ENCODE measurements at regions of chr20 and their contacts with region 1.

Region 1: DNA sequence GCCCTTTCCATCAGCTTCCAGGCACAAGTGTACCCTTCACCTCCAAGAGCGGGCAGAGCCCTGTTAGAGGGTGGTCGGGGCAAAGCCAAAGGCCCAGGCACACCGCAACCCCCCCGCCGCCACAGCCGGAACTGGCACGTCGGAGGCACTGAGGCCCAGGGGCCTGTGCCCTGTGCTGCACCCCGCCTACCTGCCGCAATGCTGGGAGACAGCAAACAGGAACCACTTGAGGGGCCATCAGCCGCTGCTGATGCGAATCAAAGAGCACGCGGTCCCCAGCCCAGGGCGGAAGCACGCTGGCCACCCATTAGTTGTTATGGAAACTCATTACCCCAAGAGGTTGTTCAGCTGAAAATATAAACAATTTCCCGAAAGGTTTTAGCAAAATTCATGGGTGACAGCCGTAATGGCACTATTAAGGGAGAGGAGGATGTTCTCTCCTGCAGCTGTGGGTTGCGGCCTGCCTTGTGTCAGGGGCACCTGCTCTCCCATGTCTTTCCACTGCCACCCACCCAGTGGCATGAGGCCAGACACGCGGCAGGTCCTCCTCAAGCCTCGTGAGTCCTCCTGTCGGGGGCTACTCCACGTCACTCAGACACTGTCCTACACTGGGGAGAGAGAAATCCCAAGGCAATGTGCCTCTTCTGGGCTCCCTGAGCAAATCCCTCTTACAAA is 65.3 kb downstream of the EDN3 start:
- DNase-seq: no peak
- H3K4me3 Mint-ChIP-seq: no peak overlapping the region
- H3K27ac Mint-ChIP-seq: no peak overlapping the region
- H3K4me1 Mint-ChIP-seq: no peaks in the 10 kb centered on the region
- H3K27me3 Mint-ChIP-seq: peaks cover 93% of the 10 kb centered on the region
- CTCF ChIP-seq: no peak

Region 2: DNA sequence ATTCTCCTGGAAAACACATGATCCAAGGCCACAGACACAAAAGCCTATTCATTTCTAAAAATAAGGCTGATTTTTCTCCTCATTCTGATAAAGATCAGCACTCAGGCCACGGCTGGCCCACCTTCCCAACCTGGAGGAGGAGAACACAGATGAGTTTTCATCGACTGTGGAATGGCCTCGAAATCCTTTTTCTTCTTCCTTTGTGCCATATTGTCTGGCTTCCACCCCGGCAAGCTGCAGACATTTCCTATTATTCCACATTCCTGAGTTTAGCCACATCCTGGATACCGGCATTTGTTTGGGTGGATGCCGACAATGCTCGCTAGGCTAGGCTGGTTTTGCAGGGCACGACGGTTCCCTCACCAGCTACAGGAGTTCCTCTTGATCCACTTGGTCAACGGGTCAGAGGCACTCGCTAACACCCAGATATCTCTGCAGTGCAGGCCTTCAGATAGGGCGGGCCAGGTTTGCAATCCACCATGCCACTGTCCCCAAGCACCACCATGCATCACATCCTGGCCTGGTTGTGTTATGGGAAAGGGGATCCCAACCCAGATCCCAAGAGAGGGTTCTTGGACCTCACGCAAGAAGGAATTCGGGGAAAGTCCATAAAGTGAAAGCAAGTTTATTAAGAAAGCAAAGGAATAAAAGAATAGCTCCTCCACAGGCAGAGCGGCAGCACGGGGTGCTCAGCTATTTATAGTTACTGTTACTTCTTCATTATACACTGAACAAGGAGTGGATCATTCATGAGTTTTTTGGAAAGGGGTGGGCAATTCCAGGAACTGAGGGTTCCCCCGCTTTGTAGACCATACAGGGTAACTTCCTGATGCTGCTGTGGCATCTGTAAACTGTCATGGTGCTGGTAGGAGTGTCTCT is 354.5 kb before region 1 on chr20:
- CTCF ChIA-PET with region 1: interaction called, 13 read pairs
- intact Hi-C with region 1: no loop called
- DNase-seq: peak; percentile 73
- H3K4me3 Mint-ChIP-seq: peak overlapping the region; percentile 4
- H3K27ac Mint-ChIP-seq: peak overlapping the region; percentile 60
- H3K4me1 Mint-ChIP-seq: peaks cover 40% of the 10 kb centered on the region
- H3K27me3 Mint-ChIP-seq: no peaks in the 10 kb centered on the region
- CTCF ChIP-seq: no peak

Measured in Calu3 (cell line).